PC-9 (cell line): ENCODE measurements at regions of chr2 and their contacts with region 1.

Region 1: DNA sequence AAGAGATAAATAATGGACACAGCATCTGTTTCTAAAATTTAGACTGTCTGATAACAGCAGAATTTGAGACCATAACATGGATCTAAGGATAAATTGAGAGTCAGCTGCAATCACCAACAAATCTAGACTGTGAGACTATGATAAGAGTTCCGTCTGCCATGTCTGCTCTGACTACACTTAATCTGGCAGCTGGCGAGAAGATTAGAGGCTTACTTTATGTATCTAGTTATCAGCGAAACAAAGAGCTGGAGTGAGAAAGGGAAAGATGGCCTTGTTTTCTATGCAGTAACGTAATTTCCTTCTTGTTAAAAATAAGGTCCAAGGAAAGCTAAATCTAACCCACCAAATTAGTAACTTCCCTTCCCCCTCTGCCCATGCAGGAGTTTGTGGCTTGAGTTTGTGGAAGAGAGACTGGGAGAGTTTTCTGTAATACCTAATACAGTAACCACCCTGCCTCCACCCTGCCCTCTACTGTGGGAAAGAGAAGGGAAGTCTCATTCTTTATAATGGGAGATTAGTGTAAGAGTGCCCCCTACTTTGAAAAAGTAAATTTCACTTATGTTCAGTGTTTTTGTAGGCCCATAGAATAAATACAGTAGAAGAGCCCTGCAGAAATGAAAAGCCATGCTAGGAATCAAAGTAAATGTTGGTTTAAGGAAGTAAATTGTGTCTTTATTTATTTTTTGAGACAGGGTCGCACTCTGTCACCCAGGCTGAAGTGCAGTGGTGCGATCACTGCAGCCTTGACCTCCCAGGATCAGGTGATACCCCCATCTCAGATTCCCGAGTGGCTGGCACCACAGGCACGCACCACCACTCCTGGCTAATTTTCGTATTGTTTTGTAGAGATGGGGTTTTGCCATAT is 27.5 kb downstream of the EML4 start:
- DNase-seq: peak in 1 of 2 experiments; percentile 13
- H3K4me3 ChIP-seq: no peak overlapping the region
- H3K27ac ChIP-seq: no peak overlapping the region
- H3K4me1 ChIP-seq: peaks cover 13% of the 10 kb centered on the region
- H3K27me3 ChIP-seq: no peaks in the 10 kb centered on the region
- CTCF ChIP-seq: peak; percentile 60

Region 2: DNA sequence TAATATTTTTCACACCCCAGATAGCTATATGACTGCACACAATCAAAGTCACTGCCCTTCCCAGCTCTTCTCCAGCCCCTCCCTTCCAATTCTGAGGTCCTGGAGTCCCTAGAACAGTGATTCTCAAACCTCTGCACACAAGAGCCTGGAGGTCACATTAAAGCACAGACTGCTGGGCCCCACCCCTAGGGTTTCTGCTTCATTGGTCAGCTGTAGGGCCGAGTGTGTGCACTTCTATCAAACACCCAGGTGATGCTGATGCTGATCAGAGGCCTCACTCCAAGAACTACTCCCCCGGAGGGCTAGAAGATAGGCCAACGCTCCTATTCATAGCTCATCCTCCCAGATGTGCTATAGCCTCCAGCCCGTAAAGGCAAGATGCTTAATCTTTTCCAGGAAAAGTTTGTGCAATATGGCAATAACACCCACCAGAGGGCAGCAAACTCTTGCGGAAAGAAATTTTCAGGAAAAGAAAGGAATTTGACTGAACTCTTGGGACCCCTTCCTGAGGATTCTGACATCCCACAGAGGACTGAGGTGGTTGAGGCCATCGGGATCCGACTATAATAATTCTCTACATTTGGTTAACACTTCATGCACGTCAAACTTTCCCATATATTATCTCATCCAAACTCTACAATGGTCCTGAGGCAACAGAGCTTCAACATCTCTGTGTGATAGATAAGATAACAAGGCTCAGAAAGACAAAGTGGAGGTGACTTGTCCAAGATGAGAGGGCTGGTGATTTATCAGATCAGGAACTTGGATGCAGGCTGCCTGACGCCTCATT is 343.0 kb before region 1 on chr2:
- CTCF ChIA-PET with region 1: no interaction called
- POLR2A ChIA-PET with region 1: no interaction called
- intact Hi-C with region 1: loop called (anchors 10 kb)
- DNase-seq: peak in 1 of 2 experiments; percentile 47
- H3K4me3 ChIP-seq: no peak overlapping the region
- H3K27ac ChIP-seq: no peak overlapping the region
- H3K4me1 ChIP-seq: peaks cover 4% of the 10 kb centered on the region
- H3K27me3 ChIP-seq: no peaks in the 10 kb centered on the region
- CTCF ChIP-seq: peak; percentile 98

Region 3: DNA sequence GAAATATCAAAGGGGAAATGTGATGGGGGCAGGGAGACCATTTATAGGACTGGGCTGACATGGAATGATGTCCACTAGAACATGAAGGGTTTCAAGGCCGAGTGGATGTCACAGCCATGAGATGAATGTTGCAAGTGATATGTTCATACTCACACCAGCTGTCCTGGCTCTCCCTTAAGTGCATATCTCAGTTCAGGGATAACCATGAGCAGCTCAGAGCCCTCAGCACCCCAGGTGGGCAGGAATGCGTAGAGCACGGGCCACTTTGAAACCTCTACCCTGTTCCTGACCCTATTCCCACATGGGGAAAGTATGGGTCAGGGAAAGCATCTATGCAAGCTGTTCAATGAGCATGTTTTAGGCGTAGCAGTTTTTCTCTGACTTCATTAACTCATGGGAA is 39.9 kb before region 1 on chr2:
- CTCF ChIA-PET with region 1: no interaction called
- POLR2A ChIA-PET with region 1: no interaction called
- intact Hi-C with region 1: no loop called
- DNase-seq: no peak
- H3K4me3 ChIP-seq: no peak overlapping the region
- H3K27ac ChIP-seq: no peak overlapping the region
- H3K4me1 ChIP-seq: no peaks in the 10 kb centered on the region
- H3K27me3 ChIP-seq: no peaks in the 10 kb centered on the region
- CTCF ChIP-seq: no peak

Region 4: DNA sequence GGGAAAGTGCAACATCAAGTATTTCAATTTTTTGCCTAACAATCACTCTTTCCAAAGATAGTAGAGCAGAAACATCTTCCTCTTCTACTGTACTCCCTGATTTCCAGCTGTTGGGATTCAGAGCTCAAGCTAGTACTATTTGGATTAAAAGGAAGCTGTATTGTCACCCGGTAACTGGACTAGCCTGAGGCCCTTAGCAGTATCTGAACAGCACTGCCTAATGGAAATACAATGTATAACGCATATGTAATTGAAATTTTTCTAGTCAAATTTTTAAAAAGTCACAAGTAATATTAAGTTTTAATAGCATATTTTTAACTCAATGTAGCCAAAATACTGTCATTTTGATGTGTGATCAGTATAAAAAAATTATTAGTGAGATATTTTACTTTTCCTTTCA is 78.2 kb after region 1 on chr2:
- CTCF ChIA-PET with region 1: no interaction called
- POLR2A ChIA-PET with region 1: interaction called, 24 read pairs
- intact Hi-C with region 1: no loop called
- DNase-seq: no peak
- H3K4me3 ChIP-seq: no peak overlapping the region
- H3K27ac ChIP-seq: no peak overlapping the region
- H3K4me1 ChIP-seq: no peaks in the 10 kb centered on the region
- H3K27me3 ChIP-seq: no peaks in the 10 kb centered on the region
- CTCF ChIP-seq: no peak

Region 5: GRCh38 chr2:42328148-42328833 is 131.7 kb after region 1 on chr2:
- CTCF ChIA-PET with region 1: no interaction called
- POLR2A ChIA-PET with region 1: no interaction called
- intact Hi-C with region 1: loop called (anchors 5 kb)
- DNase-seq: no peak
- H3K4me3 ChIP-seq: no peak overlapping the region
- H3K27ac ChIP-seq: no peak overlapping the region
- H3K4me1 ChIP-seq: no peaks in the 10 kb centered on the region
- H3K27me3 ChIP-seq: no peaks in the 10 kb centered on the region
- CTCF ChIP-seq: peak; percentile 85